H1 (cell line): ENCODE measurements at regions of chr9 and their contacts with region 1.

Region 1: GRCh38 chr9:113657703-113658544 is 194.4 kb downstream of the RGS3 start:
- DNase-seq: peak; percentile 76 to 98
- H3K4me3 ChIP-seq: no peak overlapping the region
- H3K27ac ChIP-seq: no peak overlapping the region
- H3K4me1 ChIP-seq: peaks cover 0 to 12% (median under 1%) of the 10 kb centered on the region in 4 experiments; a peak in 6 of 7 replicates
- H3K27me3 ChIP-seq: no peaks in the 10 kb centered on the region
- CTCF ChIP-seq: peak; percentile 96 to 99 (median 97)
- EP300 ChIP-seq: no peak
- POLR2A ChIP-seq: no peak
- RAD21 ChIP-seq: peak; percentile 99 to 100

Region 2: DNA sequence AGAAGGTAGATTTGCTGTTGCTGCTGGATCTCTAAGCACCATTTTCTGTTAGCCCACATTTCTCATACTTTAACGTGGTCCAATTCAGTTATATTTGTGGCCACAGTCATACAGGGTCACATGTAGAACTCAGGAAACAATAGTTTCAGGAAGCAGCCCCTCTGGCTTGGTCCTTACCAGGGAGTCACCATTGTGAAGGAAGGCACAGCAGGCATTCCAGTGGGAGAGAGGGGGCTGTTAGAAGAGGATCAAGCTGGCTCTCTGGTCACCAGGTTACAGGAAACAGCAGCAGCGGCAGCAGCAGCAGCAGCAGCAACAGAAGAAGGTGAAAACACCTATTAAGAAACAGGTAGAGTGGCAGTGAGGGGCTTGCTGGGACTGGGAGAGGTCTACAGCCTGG is 232.9 kb before region 1 on chr9:
- CTCF ChIA-PET with region 1: interaction called, 13 read pairs
- POLR2A ChIA-PET with region 1: no interaction called
- DNase-seq: no peak
- H3K4me3 ChIP-seq: no peak overlapping the region
- H3K27ac ChIP-seq: no peak overlapping the region
- H3K4me1 ChIP-seq: no peaks in the 10 kb centered on the region
- H3K27me3 ChIP-seq: no peaks in the 10 kb centered on the region
- CTCF ChIP-seq: no peak
- EP300 ChIP-seq: no peak
- POLR2A ChIP-seq: no peak
- RAD21 ChIP-seq: no peak

Region 3: GRCh38 chr9:113492343-113493212 is 165.3 kb before region 1 on chr9:
- CTCF ChIA-PET with region 1: interaction called, 10 read pairs
- POLR2A ChIA-PET with region 1: interaction called, 4 read pairs
- DNase-seq: no peak
- H3K4me3 ChIP-seq: no peak overlapping the region
- H3K27ac ChIP-seq: no peak overlapping the region
- H3K4me1 ChIP-seq: peaks cover 0 to 7% (median 3%) of the 10 kb centered on the region in 4 experiments; a peak in 4 of 7 replicates
- H3K27me3 ChIP-seq: no peaks in the 10 kb centered on the region
- CTCF ChIP-seq: no peak
- EP300 ChIP-seq: no peak
- POLR2A ChIP-seq: no peak
- RAD21 ChIP-seq: no peak

Region 4: DNA sequence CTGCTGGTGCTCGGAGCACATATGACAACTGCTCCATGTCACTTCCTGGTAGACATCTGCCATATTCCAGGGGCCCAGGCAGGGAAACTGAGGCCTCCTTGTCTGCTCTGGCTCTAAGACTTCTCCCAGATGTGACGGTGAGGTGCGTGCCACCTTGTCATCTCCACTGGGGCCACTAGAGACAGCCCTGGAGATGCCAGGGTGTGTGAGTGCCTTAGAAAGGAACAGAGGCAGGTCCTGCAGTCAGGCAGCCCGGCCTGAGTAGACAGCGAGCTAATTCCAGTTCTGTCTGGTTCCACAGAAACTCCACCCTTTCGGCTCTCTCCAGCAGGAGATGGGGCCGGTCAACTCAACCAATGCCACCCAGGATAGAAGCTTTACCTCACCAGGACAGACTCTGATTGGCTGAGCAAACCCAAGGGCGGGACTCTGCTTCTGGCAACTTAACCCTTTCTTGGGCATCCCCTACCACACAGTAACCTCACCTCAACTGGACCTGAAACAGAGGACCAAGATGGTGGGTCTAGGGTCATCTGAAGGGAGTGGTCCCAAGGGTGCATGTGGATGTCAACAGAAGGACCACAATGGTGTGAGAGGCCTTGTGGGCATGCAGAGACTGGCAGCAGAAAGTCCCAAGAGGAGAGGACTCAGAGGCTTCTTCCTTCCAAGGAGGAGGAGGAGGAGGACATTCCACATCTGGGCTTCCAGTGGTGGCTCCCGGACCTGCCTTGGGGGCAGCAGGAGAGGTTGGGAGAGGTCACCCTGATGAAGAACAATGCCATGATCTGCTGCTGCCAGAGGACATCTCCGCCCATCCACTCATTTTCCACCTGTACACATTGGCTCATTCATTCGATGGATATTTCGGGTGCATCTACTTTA is 116.7 kb before region 1 on chr9:
- CTCF ChIA-PET with region 1: interaction called, 50 read pairs
- POLR2A ChIA-PET with region 1: no interaction called
- DNase-seq: peak in 1 of 2 experiments; percentile 66
- H3K4me3 ChIP-seq: peak overlapping the region in 1 of 4 experiments; percentile 14; a peak in 1 of 8 replicates
- H3K27ac ChIP-seq: no peak overlapping the region
- H3K4me1 ChIP-seq: peaks cover 0 to 10% (median 5%) of the 10 kb centered on the region in 4 experiments; a peak in 5 of 7 replicates
- H3K27me3 ChIP-seq: no peaks in the 10 kb centered on the region
- CTCF ChIP-seq: no peak
- EP300 ChIP-seq: no peak
- POLR2A ChIP-seq: peak in 1 of 2 experiments; percentile 57; a peak in 2 of 3 replicates
- RAD21 ChIP-seq: no peak

Region 5: GRCh38 chr9:113591001-113591898 is 66.7 kb before region 1 on chr9:
- CTCF ChIA-PET with region 1: interaction called, 1,065 read pairs
- POLR2A ChIA-PET with region 1: interaction called, 46 read pairs
- DNase-seq: peak; percentile 60 to 94
- H3K4me3 ChIP-seq: no peak overlapping the region
- H3K27ac ChIP-seq: no peak overlapping the region
- H3K4me1 ChIP-seq: peaks cover 10 to 23% (median 15%) of the 10 kb centered on the region in 4 experiments
- H3K27me3 ChIP-seq: no peaks in the 10 kb centered on the region
- CTCF ChIP-seq: peak in 2 of 3 experiments; percentile 96 to 97; a peak in 3 of 4 replicates
- EP300 ChIP-seq: peak; percentile 12 to 47; a peak in 1 of 3 replicates
- POLR2A ChIP-seq: no peak
- RAD21 ChIP-seq: peak; percentile 99 to 100

Region 6: DNA sequence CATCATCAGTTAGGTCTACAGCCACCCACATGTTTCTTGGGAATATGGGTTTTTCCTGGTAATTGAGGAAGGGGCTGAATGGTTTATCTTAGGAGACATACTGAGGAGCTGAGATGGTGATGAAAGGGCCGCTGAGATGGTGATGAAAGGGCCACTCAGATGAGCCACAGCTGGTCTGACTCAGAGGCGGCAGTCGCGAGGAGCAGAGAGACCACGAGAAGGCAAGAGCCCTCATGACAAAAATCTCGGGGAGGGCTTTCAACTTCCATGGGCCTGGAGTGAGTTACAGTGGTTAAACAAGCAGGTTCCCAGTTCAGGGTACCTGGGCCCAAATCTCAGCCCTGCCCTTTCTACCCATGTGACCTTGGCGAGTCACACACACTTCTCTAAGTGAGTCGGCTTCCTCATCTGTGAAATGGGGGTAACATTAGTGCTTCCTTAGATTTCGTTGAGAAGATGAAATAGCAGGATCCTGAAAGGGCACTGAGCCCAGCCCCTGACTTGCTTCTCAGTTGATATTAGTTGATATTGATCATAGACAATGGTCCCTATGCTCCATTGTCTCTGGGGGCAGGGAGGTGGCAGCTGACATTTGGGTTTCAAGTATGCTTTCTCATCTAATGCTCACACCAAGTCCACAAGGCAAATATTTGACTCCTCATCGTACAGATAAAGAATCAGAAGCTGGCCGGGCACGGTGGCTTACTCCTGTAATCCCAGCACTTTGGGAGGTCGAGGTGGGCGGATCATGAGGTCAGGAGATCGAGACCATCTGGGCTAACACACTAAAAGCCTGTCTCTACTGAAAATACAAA is 24.9 kb before region 1 on chr9:
- CTCF ChIA-PET with region 1: interaction called, 73 read pairs
- POLR2A ChIA-PET with region 1: interaction called, 3 read pairs
- DNase-seq: no peak
- H3K4me3 ChIP-seq: no peak overlapping the region
- H3K27ac ChIP-seq: no peak overlapping the region
- H3K4me1 ChIP-seq: peaks cover 0 to 6% (median 4%) of the 10 kb centered on the region in 4 experiments; a peak in 3 of 7 replicates
- H3K27me3 ChIP-seq: peaks cover 0 to 1% (median 0%) of the 10 kb centered on the region in 4 experiments; a peak in 2 of 7 replicates
- CTCF ChIP-seq: no peak
- EP300 ChIP-seq: no peak
- POLR2A ChIP-seq: no peak
- RAD21 ChIP-seq: no peak

Region 7: DNA sequence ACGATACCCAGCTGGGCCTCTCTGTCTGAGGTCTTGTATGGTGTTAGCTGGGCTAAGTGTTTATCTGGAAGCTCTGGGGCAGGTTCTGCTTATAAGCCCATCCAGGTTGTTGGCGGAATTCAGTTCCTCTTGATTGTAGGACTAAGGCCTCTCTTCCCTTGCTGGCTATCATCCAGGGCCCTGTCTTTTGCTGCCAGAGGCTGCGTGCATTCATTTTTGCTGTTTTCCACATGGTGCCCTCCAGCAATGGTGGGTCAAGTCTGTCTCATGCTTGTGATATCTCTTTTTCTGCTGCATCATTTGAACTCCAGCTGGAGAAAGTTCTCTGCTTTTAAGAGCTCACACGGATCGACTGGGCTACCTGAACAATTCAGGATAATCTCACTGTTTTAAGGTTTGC is 112.5 kb after region 1 on chr9:
- CTCF ChIA-PET with region 1: no interaction called
- POLR2A ChIA-PET with region 1: no interaction called
- DNase-seq: no peak
- H3K4me3 ChIP-seq: no peak overlapping the region
- H3K27ac ChIP-seq: no peak overlapping the region
- H3K4me1 ChIP-seq: no peaks in the 10 kb centered on the region
- H3K27me3 ChIP-seq: no peaks in the 10 kb centered on the region
- CTCF ChIP-seq: no peak
- EP300 ChIP-seq: no peak
- POLR2A ChIP-seq: no peak
- RAD21 ChIP-seq: no peak

Region 8: DNA sequence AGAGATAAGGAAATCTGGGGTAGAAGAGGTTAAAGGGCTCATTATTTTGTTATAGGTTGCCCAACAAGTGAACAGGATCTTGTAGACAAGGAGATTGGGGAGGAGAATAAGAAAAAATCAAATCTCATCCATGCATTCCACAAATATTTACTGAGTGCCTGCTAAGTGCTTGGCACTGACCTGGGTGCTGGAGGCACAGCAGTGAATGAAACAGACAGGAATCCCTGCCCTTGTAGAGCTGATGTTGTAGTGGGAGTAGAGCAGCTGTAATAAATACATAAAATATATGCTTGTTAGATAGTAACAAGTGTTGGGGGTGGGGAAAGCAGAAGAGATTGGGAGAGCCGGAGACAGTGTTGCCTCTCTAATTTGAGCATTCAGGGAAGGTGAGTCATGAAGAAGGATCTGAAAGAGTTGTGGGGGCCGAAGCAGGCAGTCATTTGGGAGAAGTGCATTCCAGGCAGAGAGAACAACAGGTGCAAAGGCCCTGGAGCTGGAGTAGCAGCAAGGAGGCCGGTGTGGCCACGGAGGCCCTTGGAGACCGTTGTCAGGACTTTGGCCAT is 316.0 kb after region 1 on chr9:
- CTCF ChIA-PET with region 1: no interaction called
- POLR2A ChIA-PET with region 1: no interaction called
- DNase-seq: no peak
- H3K4me3 ChIP-seq: no peak overlapping the region
- H3K27ac ChIP-seq: no peak overlapping the region
- H3K4me1 ChIP-seq: no peaks in the 10 kb centered on the region
- H3K27me3 ChIP-seq: no peaks in the 10 kb centered on the region
- CTCF ChIP-seq: no peak
- EP300 ChIP-seq: no peak
- POLR2A ChIP-seq: no peak
- RAD21 ChIP-seq: no peak